OCI-LY7 (cell line): ENCODE measurements at regions of chr16 and their contacts with region 1.

Region 1: GRCh38 chr16:81392011-81392410 is 52.6 kb upstream of the CMIP start:
- DNase-seq: no peak
- H3K4me3 ChIP-seq: no peak overlapping the region
- H3K27ac ChIP-seq: no peak overlapping the region
- H3K4me1 ChIP-seq: no peaks in the 10 kb centered on the region
- CTCF ChIP-seq: no peak

Region 2: DNA sequence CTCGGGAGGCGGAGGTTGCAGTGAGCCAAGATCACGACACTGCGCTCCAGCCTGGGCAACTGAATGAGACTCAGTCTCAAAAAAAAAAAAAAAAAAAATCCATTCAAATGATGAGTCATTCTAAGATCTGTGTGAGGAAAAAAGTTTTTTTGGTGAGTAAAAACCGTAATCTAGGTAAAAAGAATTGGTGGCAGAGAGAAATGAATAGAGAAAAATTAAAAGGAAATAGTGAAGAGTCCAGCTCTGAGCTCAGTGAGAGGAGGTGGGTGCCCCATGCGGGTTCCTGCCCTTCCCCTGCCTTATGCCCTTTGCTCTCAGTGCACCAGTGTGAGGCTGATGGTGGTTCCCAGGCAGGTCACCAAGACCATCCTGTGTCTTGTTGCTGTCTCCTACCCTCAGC is 56.3 kb before region 1 on chr16:
- CTCF ChIA-PET with region 1: no interaction called
- POLR2A ChIA-PET with region 1: no interaction called
- intact Hi-C with region 1: loop called (anchors 2 kb)
- DNase-seq: no peak
- H3K4me3 ChIP-seq: no peak overlapping the region
- H3K27ac ChIP-seq: no peak overlapping the region
- H3K4me1 ChIP-seq: no peaks in the 10 kb centered on the region
- CTCF ChIP-seq: no peak

Region 3: DNA sequence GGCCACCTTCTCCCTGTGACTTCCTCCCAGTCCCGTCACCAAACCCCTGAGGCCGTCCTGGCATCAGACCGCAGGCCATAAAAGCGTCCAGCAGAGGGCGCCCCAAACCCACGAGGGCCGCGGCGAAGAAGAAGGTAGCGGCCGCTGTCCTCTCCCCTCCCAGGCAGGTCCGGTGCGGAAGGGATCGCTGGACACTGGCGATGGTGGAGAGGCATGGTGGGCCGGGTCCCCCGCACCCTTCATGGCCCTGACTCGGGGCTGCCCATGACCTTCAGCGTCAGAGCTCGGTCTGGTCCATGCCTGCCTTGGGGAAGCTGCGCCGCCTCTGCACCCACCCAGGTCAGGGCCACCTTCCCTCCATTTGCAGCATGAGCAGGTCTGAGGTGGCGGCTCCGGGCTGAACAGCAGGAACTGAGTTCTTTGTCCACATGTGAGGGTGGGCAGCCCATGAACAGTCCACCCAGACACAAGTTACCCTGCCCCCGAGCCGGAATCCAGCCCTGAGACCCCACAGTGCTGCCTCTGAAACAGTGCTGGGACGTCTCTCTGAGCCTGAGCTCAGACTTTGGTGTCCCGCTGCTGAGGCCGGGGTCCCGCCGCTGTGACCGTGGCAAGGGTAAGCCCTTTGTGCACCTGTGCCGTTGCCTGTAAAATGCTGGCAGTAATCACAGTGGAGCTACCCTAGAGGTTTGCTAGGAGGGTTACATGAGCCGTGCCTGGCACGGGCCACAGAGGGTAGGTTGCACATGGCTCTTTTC is 11.8 kb after region 1 on chr16:
- CTCF ChIA-PET with region 1: no interaction called
- POLR2A ChIA-PET with region 1: no interaction called
- intact Hi-C with region 1: no loop called
- DNase-seq: peak; percentile 86
- H3K4me3 ChIP-seq: peak overlapping the region; percentile 55
- H3K27ac ChIP-seq: no peak overlapping the region
- H3K4me1 ChIP-seq: peaks cover 10% of the 10 kb centered on the region
- CTCF ChIP-seq: peak; percentile 92